CD8-positive, alpha-beta memory T cell (primary cell): ENCODE measurements at regions of chr11 and their contacts with region 1.

Region 1: GRCh38 chr11:128172046-128172878 is 415.1 kb downstream of the ETS1 start:
- DNase-seq: peak; percentile 67 to 86 (median 76)
- H3K4me3 ChIP-seq: no peak overlapping the region
- H3K4me3 Mint-ChIP-seq: no peak overlapping the region
- H3K27ac ChIP-seq: no peak overlapping the region
- H3K27ac Mint-ChIP-seq: peak overlapping the region in 2 of 8 donors; percentile 57 to 90
- H3K4me1 ChIP-seq: no peaks in the 10 kb centered on the region
- H3K4me1 Mint-ChIP-seq: peaks cover 0 to 6% (median 3%) of the 10 kb centered on the region in 3 donors
- H3K27me3 ChIP-seq: no peaks in the 10 kb centered on the region
- H3K27me3 Mint-ChIP-seq: no peaks in the 10 kb centered on the region

Region 2: DNA sequence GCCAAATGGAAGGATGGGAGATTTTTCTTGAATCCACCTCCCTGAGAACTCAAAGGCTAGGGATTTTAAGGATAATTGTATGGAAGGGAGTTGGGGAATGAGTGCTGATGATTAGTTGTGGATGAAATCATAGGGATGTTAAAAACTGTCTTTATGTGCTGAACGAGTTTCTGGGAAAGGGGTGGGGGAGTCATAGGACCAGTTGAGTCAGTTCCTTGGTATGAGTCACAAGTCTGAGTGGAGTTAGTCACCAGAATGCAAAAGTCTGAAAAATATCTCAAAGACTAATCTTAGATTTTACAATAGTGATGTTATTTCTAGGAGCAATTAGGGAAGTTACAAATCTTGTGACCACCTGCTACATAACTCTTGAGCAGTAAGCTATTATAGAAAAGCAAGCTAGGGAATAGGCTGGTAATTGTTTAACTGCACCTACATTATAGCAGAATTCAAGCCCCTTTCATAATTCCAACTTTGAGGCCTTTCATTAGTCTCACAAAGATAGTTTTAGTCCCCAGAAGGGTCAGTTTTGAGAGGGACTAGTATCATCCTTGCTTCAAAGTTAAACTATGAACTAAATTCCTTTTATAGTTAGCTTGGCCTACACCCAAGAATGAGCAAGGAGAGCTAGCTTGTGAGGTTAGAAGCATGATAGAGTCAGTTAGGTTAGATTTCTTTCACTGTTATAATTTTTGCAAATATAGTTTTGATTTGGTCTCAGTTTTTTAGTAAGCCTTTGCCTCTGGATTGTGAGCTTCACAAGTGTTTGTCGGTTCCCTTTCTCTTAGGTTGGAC is 252.9 kb before region 1 on chr11:
- CTCF ChIA-PET with region 1: no interaction called
- POLR2A ChIA-PET with region 1: no interaction called
- DNase-seq: no peak
- H3K4me3 ChIP-seq: no peak overlapping the region
- H3K4me3 Mint-ChIP-seq: no peak overlapping the region
- H3K27ac ChIP-seq: no peak overlapping the region
- H3K27ac Mint-ChIP-seq: no peak overlapping the region
- H3K4me1 ChIP-seq: no peaks in the 10 kb centered on the region
- H3K4me1 Mint-ChIP-seq: no peaks in the 10 kb centered on the region
- H3K27me3 ChIP-seq: no peaks in the 10 kb centered on the region
- H3K27me3 Mint-ChIP-seq: peaks cover 15 to 46% of the 10 kb centered on the region in 2 donors

Region 3: DNA sequence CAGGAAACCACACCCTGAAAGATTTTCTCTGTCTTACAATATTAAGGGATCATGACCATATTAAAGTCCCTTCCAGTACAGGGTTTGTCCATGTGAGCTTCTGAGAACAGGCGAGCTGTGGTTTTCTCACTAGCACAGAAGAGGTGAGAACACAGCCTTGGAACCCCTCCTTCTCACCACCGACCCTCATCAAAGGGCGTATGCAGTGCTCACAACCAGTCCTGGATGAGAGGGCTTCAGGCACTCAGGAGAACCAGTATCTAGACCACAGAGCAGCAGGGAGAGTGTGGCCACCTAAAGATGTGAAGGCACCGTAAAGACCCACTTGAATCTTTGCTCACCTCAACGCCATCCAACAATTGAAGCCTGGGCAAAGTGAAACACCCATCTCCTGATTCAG is 18.1 kb after region 1 on chr11:
- CTCF ChIA-PET with region 1: interaction called, 11 read pairs
- POLR2A ChIA-PET with region 1: no interaction called
- DNase-seq: peak in 4 of 5 donors; percentile 16 to 75 (median 53)
- H3K4me3 ChIP-seq: peak overlapping the region; percentile 19
- H3K4me3 Mint-ChIP-seq: peak overlapping the region; percentile 14 to 87 (median 65)
- H3K27ac ChIP-seq: no peak overlapping the region
- H3K27ac Mint-ChIP-seq: peak overlapping the region; percentile 38 to 96 (median 91)
- H3K4me1 ChIP-seq: peaks cover 44% of the 10 kb centered on the region
- H3K4me1 Mint-ChIP-seq: peaks cover 44 to 61% (median 51%) of the 10 kb centered on the region in 3 donors
- H3K27me3 ChIP-seq: no peaks in the 10 kb centered on the region
- H3K27me3 Mint-ChIP-seq: no peaks in the 10 kb centered on the region

Region 4: DNA sequence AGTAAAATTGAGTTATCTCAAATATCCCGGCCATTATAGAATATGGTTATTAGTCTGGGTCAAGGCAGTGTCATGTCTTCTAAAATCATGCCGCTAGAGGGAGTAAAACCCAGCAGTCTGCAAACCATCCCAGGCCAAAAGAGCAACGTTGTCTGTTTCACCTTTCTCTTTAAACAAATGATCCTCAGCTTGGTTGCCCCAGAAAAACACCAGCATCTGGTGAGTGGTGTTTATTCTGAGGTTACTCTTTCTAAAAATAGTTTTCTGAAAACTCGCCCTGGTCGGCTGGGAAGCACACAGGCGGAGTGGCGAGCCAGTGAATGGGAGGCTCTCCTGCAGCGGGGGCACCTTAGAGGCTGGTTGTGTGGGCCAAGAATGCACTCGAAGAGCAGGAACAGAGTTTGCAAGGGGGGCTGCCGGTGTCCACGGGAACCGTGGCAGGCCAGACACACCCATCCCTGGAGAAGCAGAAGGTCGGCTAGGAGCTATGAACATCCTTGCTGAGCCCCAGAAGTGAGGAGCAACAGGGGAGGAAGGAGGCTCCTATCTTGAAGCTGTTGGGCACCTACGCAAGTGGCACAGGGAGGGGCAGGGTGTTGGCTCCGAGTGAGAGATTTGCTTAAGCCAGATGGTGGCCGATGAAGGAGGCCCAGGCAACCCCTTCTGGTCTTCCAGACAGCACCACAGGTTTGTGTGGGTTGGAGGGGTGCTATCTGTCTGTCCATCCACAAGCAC is 118.0 kb after region 1 on chr11:
- CTCF ChIA-PET with region 1: interaction called, 13 read pairs
- POLR2A ChIA-PET with region 1: no interaction called
- DNase-seq: peak; percentile 41 to 84 (median 80)
- H3K4me3 ChIP-seq: peak overlapping the region; percentile 58
- H3K4me3 Mint-ChIP-seq: peak overlapping the region; percentile 88 to 97 (median 93)
- H3K27ac ChIP-seq: peak overlapping the region; percentile 85
- H3K27ac Mint-ChIP-seq: peak overlapping the region; percentile 98 to 100 (median 99)
- H3K4me1 ChIP-seq: peaks cover 84% of the 10 kb centered on the region
- H3K4me1 Mint-ChIP-seq: peaks cover 89 to 99% (median 98%) of the 10 kb centered on the region in 3 donors
- H3K27me3 ChIP-seq: no peaks in the 10 kb centered on the region
- H3K27me3 Mint-ChIP-seq: no peaks in the 10 kb centered on the region

Region 5: GRCh38 chr11:128757235-128757711 is 585.0 kb after region 1 on chr11:
- CTCF ChIA-PET with region 1: interaction called, 17 read pairs
- POLR2A ChIA-PET with region 1: no interaction called
- DNase-seq: peak; percentile 44 to 83 (median 67)
- H3K4me3 ChIP-seq: no peak overlapping the region
- H3K4me3 Mint-ChIP-seq: peak overlapping the region in 6 of 7 donors; percentile 36 to 65 (median 47)
- H3K27ac ChIP-seq: no peak overlapping the region
- H3K27ac Mint-ChIP-seq: peak overlapping the region; percentile 76 to 99 (median 90)
- H3K4me1 ChIP-seq: peaks cover 66% of the 10 kb centered on the region
- H3K4me1 Mint-ChIP-seq: peaks cover 79 to 93% (median 86%) of the 10 kb centered on the region in 3 donors
- H3K27me3 ChIP-seq: no peaks in the 10 kb centered on the region
- H3K27me3 Mint-ChIP-seq: peaks cover 0 to 2% of the 10 kb centered on the region in 2 donors

Region 6: GRCh38 chr11:128825050-128825784 is 653.0 kb after region 1 on chr11:
- CTCF ChIA-PET with region 1: interaction called, 57 read pairs
- POLR2A ChIA-PET with region 1: interaction called, 3 read pairs
- DNase-seq: no peak
- H3K4me3 ChIP-seq: no peak overlapping the region
- H3K4me3 Mint-ChIP-seq: no peak overlapping the region
- H3K27ac ChIP-seq: no peak overlapping the region
- H3K27ac Mint-ChIP-seq: peak overlapping the region in 6 of 8 donors; percentile 56 to 92 (median 70)
- H3K4me1 ChIP-seq: peaks cover 6% of the 10 kb centered on the region
- H3K4me1 Mint-ChIP-seq: peaks cover 7 to 11% (median 7%) of the 10 kb centered on the region in 3 donors
- H3K27me3 ChIP-seq: no peaks in the 10 kb centered on the region
- H3K27me3 Mint-ChIP-seq: no peaks in the 10 kb centered on the region

Region 7: GRCh38 chr11:128859563-128860441 is 687.5 kb after region 1 on chr11:
- CTCF ChIA-PET with region 1: interaction called, 30 read pairs
- POLR2A ChIA-PET with region 1: no interaction called
- DNase-seq: peak; percentile 55 to 82 (median 66)
- H3K4me3 ChIP-seq: no peak overlapping the region
- H3K4me3 Mint-ChIP-seq: peak overlapping the region in 1 of 7 donors; percentile 33
- H3K27ac ChIP-seq: no peak overlapping the region
- H3K27ac Mint-ChIP-seq: peak overlapping the region in 1 of 8 donors; percentile 17
- H3K4me1 ChIP-seq: no peaks in the 10 kb centered on the region
- H3K4me1 Mint-ChIP-seq: peaks cover 3 to 9% (median 8%) of the 10 kb centered on the region in 3 donors
- H3K27me3 ChIP-seq: no peaks in the 10 kb centered on the region
- H3K27me3 Mint-ChIP-seq: peaks cover 4 to 7% of the 10 kb centered on the region in 2 donors